Activated B cell treated with CpG ODN at 0.5 μM for 24 hours (primary cell): ENCODE measurements at regions of chr2 and their contacts with region 1.

Region 1: DNA sequence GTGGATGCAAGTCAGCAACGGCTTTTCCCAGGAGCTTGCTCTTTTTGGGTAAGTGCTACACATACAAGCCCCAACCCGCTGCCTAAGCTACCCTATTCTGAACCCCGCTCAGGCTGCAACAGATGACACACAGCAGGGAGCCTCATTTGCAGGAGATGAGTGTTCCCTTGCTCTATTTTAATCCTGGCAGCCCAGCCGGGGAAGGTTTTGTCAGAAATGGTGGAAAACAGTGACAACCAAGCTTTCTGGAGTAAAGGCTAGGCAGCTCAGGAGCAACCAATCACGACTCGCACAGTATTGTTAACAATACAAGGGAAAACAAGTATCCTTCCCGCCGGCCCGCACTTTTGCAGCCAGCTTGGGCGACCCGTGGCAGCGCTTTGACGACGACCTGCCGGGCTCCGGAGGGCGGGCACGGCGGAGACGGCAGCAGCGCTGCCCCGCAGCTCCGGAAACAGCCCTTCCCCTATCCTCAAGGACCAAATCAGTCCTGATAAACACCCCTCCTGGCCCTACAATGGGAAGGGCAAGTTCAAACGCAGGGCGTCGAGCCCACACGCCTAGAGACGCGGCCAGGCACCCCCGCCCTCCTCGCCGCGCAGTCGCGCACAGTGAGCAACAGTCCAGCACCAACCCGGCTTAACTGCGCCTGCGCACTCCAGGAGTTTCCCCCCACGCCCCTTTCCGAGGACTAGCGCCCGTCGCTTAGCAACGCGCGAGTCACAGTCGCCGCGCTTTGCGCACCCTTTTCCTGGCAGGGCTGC is 74.3 kb upstream of the TSPYL6 start:
- DNase-seq: peak; percentile 77
- ATAC-seq: peak; percentile 96
- H3K4me3 Mint-ChIP-seq: peak overlapping the region; percentile 89
- H3K27ac Mint-ChIP-seq: peak overlapping the region; percentile 70
- H3K4me1 Mint-ChIP-seq: peaks cover 21% of the 10 kb centered on the region
- H3K27me3 Mint-ChIP-seq: peaks cover 13% of the 10 kb centered on the region
- CTCF ChIP-seq: no peak

Region 2: DNA sequence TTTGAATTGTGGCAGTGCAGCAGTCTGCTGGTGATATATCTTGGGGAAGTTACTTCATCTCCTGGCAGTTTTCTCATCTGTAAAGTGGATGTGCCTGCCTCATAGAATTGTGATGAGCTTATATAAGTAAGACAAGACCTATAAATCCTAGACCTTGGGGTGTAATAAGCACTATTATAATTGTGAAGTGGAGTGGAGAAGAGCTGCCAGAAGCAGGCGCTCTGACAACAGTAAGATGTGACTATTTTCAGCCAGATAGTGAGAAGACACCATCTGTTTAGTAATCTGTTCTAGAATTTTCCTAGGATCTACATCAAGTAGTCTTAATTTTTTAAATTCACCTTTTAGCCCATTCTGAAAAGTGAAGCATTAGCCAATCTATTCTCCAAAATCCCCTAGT is 11.3 kb after region 1 on chr2:
- CTCF ChIA-PET with region 1: no interaction called
- POLR2A ChIA-PET with region 1: no interaction called
- intact Hi-C with region 1: no loop called
- DNase-seq: no peak
- ATAC-seq: no peak
- H3K4me3 Mint-ChIP-seq: no peak overlapping the region
- H3K27ac Mint-ChIP-seq: no peak overlapping the region
- H3K4me1 Mint-ChIP-seq: no peaks in the 10 kb centered on the region
- H3K27me3 Mint-ChIP-seq: peaks cover 28% of the 10 kb centered on the region
- CTCF ChIP-seq: no peak

Region 3: GRCh38 chr2:54394392-54394791 is 64.0 kb after region 1 on chr2:
- CTCF ChIA-PET with region 1: no interaction called
- POLR2A ChIA-PET with region 1: no interaction called
- intact Hi-C with region 1: loop called (anchors 2 kb)
- DNase-seq: no peak
- ATAC-seq: peak; percentile 69
- H3K4me3 Mint-ChIP-seq: peak overlapping the region; percentile 53
- H3K27ac Mint-ChIP-seq: peak overlapping the region; percentile 32
- H3K4me1 Mint-ChIP-seq: peaks cover 10% of the 10 kb centered on the region
- H3K27me3 Mint-ChIP-seq: no peaks in the 10 kb centered on the region
- CTCF ChIP-seq: no peak

Region 4: DNA sequence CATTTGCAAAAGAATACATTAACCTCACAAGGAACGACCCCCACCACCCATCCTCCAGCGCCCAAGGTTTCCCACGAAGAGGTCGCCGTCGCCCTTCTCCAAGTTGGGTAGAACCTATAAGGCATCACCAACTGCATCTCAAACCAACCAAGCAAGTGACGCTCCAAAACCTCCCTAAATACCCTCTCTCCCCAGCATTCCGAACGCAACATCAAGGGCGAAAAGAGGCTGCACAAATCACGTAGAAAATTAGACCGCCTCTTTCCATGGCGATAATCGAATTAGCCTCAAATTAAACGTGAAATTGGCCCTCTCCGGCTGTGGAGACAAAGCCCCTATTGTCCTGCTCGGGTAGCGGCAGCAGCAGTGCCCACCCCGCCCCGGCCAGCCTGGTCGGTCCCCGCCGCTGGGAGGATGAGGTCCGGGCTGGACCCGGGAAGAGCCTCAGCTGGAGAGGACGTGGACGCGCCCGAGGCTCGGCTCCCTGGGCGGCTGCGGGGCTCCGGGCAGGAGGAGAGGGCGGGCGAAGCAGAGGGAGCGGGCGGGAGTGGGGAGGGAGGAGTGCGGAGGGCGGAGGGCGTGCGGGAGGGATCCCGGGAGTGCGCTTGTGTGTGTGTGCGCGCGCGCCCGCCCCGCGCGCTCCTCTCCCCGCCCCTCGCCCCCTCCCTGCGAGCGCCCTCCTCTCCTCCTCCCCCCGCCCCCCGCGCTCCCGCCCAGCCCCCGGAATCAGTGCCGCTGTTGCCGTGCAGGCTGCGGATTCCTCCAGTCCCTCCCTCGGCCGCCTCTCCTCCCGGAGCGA is 125.4 kb after region 1 on chr2 and contains the start of gene SPTBN1:
- CTCF ChIA-PET with region 1: no interaction called
- POLR2A ChIA-PET with region 1: no interaction called
- intact Hi-C with region 1: loop called (anchors 5 kb)
- DNase-seq: peak; percentile 22
- ATAC-seq: peak; percentile 36
- H3K4me3 Mint-ChIP-seq: peak within 1 kb of the TSS; percentile 86
- H3K27ac Mint-ChIP-seq: no peak within 1 kb of the TSS
- H3K4me1 Mint-ChIP-seq: peaks cover 17% of the 10 kb centered on the region
- H3K27me3 Mint-ChIP-seq: peaks cover 30% of the 10 kb centered on the region
- CTCF ChIP-seq: no peak
- total RNA-seq, gene SPTBN1: 82.9 and 83.2 TPM in 2 replicates